OCI-LY7 (cell line): ENCODE measurements at regions of chrX and their contacts with region 1.

Region 1: DNA sequence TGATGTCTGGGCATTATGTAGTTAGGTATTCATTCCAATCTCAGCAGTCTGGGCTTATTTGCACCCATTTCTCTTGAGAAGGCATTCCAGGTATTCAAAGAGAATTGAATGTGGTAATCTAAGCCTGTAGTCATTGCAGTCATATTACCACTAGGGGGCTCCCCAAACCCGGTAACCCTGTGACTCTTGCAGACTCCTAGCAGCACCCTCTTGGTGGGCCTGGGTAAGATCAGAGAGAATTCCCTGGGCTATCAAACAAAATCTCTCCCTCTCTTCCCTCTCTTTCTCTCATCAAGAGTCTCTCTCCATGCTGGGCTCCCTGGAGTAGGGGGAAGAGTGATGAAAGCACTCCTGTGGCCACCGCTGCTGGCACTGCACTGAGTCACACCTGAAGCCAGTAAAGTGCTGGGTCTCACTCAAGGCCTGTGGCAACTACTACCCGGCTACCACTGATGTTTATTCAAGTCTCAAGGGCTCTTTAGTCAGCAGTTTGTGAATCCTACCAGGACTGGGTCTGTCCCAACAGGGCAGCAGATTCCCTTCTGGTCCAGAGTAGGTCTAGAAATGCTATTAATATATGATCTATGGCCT is 187.7 kb upstream of the NUDT10 start:
- DNase-seq: peak; percentile 57
- H3K4me3 ChIP-seq: no peak overlapping the region
- H3K27ac ChIP-seq: no peak overlapping the region
- H3K4me1 ChIP-seq: no peaks in the 10 kb centered on the region
- CTCF ChIP-seq: peak; percentile 79

Region 2: GRCh38 chrX:51242212-51242611 is 97.3 kb after region 1 on chrX:
- CTCF ChIA-PET with region 1: no interaction called
- POLR2A ChIA-PET with region 1: no interaction called
- intact Hi-C with region 1: no loop called
- DNase-seq: no peak
- H3K4me3 ChIP-seq: no peak overlapping the region
- H3K27ac ChIP-seq: no peak overlapping the region
- H3K4me1 ChIP-seq: no peaks in the 10 kb centered on the region
- CTCF ChIP-seq: no peak

Region 3: DNA sequence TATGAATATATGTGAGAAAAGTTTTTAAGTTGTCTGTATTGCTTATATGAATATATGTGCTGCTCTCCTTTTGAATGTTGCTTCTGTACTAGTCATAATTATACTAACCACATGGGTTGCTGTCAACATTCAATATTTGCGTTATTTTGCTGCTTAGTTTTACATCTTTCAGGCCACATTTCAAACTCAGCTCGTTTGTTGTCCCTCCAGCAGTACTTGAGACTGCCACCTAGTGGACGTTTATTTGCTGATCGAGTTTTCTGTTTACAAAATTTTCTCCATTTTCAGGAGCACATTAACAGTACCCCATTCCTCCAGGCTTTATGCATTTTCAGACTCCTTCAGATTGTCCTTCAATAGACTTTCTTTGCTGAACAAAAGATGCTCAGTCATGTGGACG is 275.7 kb after region 1 on chrX:
- CTCF ChIA-PET with region 1: no interaction called
- POLR2A ChIA-PET with region 1: no interaction called
- intact Hi-C with region 1: loop called (anchors 10 kb)
- DNase-seq: peak; percentile 73
- H3K4me3 ChIP-seq: no peak overlapping the region
- H3K27ac ChIP-seq: no peak overlapping the region
- H3K4me1 ChIP-seq: peaks cover 39% of the 10 kb centered on the region
- CTCF ChIP-seq: peak; percentile 81

Region 4: DNA sequence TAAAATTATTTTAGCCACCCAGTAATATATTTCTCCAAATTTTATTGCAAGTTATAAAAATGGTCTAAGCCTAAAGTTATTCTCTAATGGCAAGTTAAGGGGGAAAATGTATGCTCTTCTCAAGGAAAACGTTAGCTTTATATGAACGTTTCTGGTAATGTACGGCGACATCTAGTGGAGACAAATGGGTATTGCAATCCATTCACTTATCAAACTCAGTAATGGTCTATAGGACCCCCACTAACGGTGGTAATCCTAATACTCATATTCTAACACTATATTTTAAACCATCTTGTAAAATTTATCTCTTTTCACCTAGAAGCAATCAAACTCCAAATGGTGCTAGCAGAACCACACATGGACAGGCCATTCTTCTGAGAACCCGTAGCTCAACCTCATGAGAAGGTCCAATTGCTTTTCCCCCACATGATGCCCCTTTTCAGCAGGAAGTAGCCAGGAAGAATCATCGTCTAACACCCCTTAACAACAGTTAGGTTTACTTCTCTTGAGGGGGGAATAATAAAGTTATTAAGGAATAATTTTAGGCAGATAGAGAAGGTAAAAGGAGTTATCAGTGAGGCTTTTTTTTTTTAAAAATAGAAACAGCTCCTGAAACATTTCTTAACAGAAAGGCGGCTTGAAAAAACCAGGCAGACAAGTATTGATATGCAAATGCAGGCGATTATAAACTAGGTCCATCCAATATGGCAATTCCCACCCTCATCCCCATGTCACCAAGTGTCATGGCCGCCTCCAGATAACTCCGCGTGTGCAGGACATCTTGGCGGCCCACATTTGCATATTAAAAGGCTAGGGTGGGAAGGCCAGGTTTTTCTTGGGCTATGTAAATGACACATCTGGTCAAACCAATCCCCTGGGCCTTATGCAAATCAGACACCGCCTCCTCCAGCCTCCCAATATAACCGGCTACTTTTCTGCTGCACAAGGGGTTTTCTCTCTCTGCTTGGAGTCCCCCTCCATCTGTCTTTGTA is 316.4 kb after region 1 on chrX:
- CTCF ChIA-PET with region 1: no interaction called
- POLR2A ChIA-PET with region 1: interaction called, 3 read pairs
- intact Hi-C with region 1: loop called (anchors 1 kb)
- DNase-seq: peak; percentile 47
- H3K4me3 ChIP-seq: no peak overlapping the region
- H3K27ac ChIP-seq: no peak overlapping the region
- H3K4me1 ChIP-seq: peaks cover 5% of the 10 kb centered on the region
- CTCF ChIP-seq: peak; percentile 77